Esophagus squamous epithelium (tissue), 5 donors: ENCODE measurements at regions of chr4 and their contacts with region 1.

Region 1: DNA sequence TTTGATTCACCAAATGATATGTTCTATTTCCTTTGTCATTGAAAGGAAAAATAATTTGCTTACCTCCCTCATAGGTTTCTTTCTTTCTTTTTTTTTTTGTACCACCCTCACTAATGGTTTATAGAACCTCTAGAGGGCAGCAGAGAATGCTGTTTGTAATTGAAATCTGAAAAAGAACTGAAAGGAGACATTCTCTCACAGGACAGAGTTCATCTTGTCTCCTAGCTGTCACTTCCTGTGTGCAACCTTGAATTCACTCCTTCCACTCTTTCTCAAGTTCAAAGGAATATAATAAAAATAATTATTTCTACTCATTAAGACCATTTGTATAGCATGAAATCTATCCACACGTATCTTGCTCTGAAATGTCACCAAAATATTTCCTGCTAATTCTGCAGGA is 51.0 kb downstream of the GUCY1B1 start:
- DNase-seq: no peak
- H3K4me3 ChIP-seq: no peak overlapping the region
- H3K27ac ChIP-seq: no peak overlapping the region
- H3K4me1 ChIP-seq: no peaks in the 10 kb centered on the region
- H3K27me3 ChIP-seq: no peaks in the 10 kb centered on the region
- CTCF ChIP-seq: peak; percentile 23 to 62 (median 50)
- POLR2A ChIP-seq: no peak

Region 2: GRCh38 chr4:155953151-155954114 is 143.6 kb after region 1 on chr4 and contains the start of gene CTSO:
- intact Hi-C with region 1: loop called (anchors 5 kb)
- DNase-seq: peak; percentile 23
- H3K4me3 ChIP-seq: peak within 1 kb of the TSS; percentile 64 to 99 (median 89)
- H3K27ac ChIP-seq: peak within 1 kb of the TSS; percentile 91 to 100 (median 98)
- H3K4me1 ChIP-seq: peaks cover 0 to 18% (median 3%) of the 10 kb centered on the region in 3 donors
- H3K27me3 ChIP-seq: no peaks in the 10 kb centered on the region
- CTCF ChIP-seq: peak; percentile 22 to 66 (median 54)
- POLR2A ChIP-seq: peak in 2 of 4 donors; percentile 59 to 63
- total RNA-seq, gene CTSO: 1.6 to 11.3 (median 6.7) TPM